ENCODE measurements at regions of chr14 and their contacts with region 1.

Region 1: GRCh38 chr14:73997108-73997943 is 21.8 kb downstream of the ENTPD5 start:
- DNase-seq: no peak
- H3K4me3 ChIP-seq: no peak overlapping the region
- H3K27ac ChIP-seq: no peak overlapping the region
- H3K4me1 ChIP-seq: no peaks in the 10 kb centered on the region
- H3K27me3 ChIP-seq: no peaks in the 10 kb centered on the region
- CTCF ChIP-seq: no peak

Region 2: GRCh38 chr14:73961192-73961591 is 36.1 kb before region 1 on chr14:
- CTCF ChIA-PET with region 1: no interaction called
- dilution Hi-C with region 1: loop called (anchors 5 kb)
- in situ Hi-C with region 1: no loop called
- intact Hi-C with region 1: no loop called
- DNase-seq: no peak
- H3K4me3 ChIP-seq: no peak overlapping the region
- H3K27ac ChIP-seq: no peak overlapping the region
- H3K4me1 ChIP-seq: peaks cover 7% of the 10 kb centered on the region
- H3K27me3 ChIP-seq: no peaks in the 10 kb centered on the region
- CTCF ChIP-seq: no peak